Cardiac septum (tissue), 1 donor: ENCODE measurements at regions of chr15 and their contacts with region 1.

Region 1: DNA sequence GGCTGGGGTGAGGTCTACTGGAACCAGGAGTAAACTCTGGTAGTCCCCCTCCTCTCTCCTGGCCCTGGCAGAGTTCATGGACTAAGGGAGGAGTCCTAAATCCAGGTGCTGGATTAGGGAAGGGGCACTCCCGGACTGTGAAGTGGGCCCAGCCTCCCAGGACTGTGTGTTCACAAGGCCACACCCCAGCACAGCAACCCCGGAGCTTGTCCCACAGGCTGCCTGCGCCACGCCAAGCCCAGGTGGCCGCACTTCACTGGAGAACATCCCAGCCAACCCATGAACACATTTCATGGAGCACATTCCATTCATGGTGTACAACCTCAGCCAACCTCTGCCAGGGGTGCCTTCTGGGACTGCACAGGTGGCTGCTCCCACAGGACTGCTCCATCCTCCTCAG is 8.2 kb downstream of the ARPIN start:
- DNase-seq: no peak

Region 2: DNA sequence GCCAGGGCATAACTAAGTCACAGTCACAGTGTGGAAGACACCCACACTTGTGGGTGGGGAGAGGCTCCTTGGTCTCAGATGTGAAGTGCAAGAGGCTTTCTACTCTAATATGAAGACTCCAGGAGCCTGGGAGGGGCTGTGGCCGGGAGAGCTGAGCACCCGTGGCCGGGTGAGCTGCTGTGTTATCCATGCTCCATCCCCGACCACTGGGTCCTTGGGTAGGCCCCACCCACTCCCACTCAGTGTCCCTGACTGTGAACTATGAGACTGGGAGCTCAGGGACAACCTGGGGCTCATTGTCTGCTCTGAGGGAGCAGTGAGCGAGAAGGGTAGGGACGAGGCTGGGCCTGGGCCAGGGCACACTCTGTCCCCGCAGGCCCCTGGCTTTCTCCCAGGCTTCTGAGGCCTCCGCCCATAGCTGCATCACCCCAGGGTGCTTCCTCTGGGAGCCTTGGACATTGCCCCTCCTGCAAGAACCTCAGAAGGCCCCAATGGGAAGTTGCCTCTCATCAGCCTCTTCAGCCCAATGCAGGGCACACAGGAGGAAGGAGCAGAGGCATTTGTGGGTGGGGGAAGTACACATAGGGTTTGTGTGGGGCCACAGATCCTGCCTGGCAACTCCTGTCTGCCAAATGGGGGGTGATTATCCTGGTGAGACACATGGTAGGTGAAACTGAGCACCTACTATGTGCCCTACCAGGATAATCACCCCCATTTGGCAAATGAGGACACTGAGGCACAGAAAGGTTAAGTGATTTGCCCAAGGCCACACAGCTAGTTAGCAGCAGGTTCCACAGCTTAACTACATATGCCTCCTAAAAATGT is 92.3 kb before region 1 on chr15:
- intact Hi-C with region 1: no loop called
- DNase-seq: no peak

Region 3: GRCh38 chr15:89999676-90000185 is 95.2 kb after region 1 on chr15:
- intact Hi-C with region 1: loop called (anchors 5 kb)
- DNase-seq: no peak